Dendritic cell treated with granulocyte-macrophage colony-stimulating factor and Interleukin-4, amounts not matched to agents 40 ng/mL and 50 ng/mL, for 4 days (primary cell): ENCODE measurements at regions of chr16 and their contacts with region 1.

Region 1: GRCh38 chr16:27313422-27314160 is at the start of gene IL4R:
- H3K4me3 Mint-ChIP-seq: peak within 1 kb of the TSS; percentile 79
- H3K27ac Mint-ChIP-seq: peak within 1 kb of the TSS; percentile 95
- H3K4me1 Mint-ChIP-seq: peaks cover 63% of the 10 kb centered on the region
- H3K27me3 Mint-ChIP-seq: peaks cover 8% of the 10 kb centered on the region

Region 2: GRCh38 chr16:27268376-27269299 is 45.0 kb before region 1 on chr16 and contains the start of gene NSMCE1:
- intact Hi-C with region 1: loop called (anchors 5 kb)
- H3K4me3 Mint-ChIP-seq: peak within 1 kb of the TSS; percentile 97
- H3K27ac Mint-ChIP-seq: peak within 1 kb of the TSS; percentile 97
- H3K4me1 Mint-ChIP-seq: peaks cover 46% of the 10 kb centered on the region
- H3K27me3 Mint-ChIP-seq: no peaks in the 10 kb centered on the region

Region 3: GRCh38 chr16:27347930-27348685 is 34.5 kb after region 1 on chr16:
- intact Hi-C with region 1: loop called (anchors 5 kb)
- H3K4me3 Mint-ChIP-seq: peak overlapping the region; percentile 25
- H3K27ac Mint-ChIP-seq: peak overlapping the region; percentile 90
- H3K4me1 Mint-ChIP-seq: peaks cover 50% of the 10 kb centered on the region
- H3K27me3 Mint-ChIP-seq: no peaks in the 10 kb centered on the region

Region 4: GRCh38 chr16:27367461-27368357 is 54.1 kb after region 1 on chr16:
- intact Hi-C with region 1: no loop called
- H3K4me3 Mint-ChIP-seq: peak overlapping the region; percentile 62
- H3K27ac Mint-ChIP-seq: peak overlapping the region; percentile 82
- H3K4me1 Mint-ChIP-seq: peaks cover 53% of the 10 kb centered on the region
- H3K27me3 Mint-ChIP-seq: no peaks in the 10 kb centered on the region